ENCODE measurements at regions of chr1 and their contacts with region 1.

Region 1: DNA sequence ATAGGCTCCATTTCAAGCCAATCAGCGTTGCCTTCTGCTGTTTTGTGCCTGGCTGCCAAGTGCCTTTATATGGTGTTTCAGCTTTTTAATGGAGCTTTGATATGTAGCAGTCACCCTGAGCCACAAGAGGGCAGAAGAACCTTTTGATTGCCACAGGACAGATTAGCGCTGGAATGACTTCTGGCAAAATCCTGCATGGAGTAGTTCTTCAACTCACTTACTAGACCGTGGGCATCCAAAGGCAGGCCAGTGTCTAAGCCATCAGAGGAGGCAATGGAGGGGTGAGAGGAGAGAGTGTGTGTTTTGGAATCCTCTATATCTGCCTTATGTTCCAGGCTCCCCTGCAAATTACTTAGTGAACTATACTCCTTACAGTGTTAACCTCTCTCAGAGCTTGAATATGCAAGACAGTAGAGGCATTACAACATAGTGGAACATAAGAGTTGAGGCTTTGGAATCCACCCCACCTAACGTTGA is 56.2 kb downstream of the ST3GAL3 start:
- DNase-seq: peak; percentile 84
- H3K4me3 ChIP-seq: no peak overlapping the region
- H3K27ac ChIP-seq: peak overlapping the region; percentile 46
- H3K4me1 ChIP-seq: peaks cover 48% of the 10 kb centered on the region
- H3K27me3 ChIP-seq: no peaks in the 10 kb centered on the region
- CTCF ChIP-seq: peak; percentile 87 to 93

Region 2: DNA sequence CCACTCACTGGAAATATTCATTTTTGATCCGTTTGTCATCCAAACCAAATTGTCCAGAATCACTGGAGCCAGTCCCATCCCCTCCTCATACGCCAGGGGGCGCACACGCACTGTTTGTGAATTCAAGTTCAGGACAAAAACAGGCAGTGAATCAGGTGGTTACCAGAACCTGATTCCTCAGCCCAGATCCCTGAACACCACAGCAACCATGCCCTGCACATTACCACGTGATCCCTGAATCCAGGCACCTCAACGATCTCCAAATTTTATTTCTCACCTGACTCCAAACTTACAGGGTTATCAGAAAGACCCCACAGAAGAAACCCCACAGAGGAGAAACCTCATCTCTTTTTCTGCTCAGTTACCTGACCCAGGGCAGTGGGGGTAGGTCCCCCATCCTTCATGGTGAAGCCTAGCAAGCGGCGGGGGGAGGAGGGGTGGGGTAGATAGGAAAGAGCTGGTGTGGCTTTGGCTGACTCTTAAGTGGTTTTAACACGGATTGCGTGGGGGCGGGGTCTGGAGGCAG is 234.3 kb before region 1 on chr1:
- CTCF ChIA-PET with region 1: no interaction called
- dilution Hi-C with region 1: no loop called
- in situ Hi-C with region 1: no loop called
- intact Hi-C with region 1: loop called (anchors 1 kb)
- DNase-seq: peak; percentile 75
- H3K4me3 ChIP-seq: no peak overlapping the region
- H3K27ac ChIP-seq: no peak overlapping the region
- H3K4me1 ChIP-seq: peaks cover 24% of the 10 kb centered on the region
- H3K27me3 ChIP-seq: no peaks in the 10 kb centered on the region
- CTCF ChIP-seq: peak; percentile 93 to 98

Region 3: GRCh38 chr1:43836267-43836951 is 72.9 kb after region 1 on chr1:
- CTCF ChIA-PET with region 1: no interaction called
- dilution Hi-C with region 1: loop called (anchors 5 kb)
- in situ Hi-C with region 1: no loop called
- intact Hi-C with region 1: loop called (anchors 2 kb)
- DNase-seq: peak; percentile 84
- H3K4me3 ChIP-seq: no peak overlapping the region
- H3K27ac ChIP-seq: peak overlapping the region; percentile 56
- H3K4me1 ChIP-seq: peaks cover 69% of the 10 kb centered on the region
- H3K27me3 ChIP-seq: no peaks in the 10 kb centered on the region
- CTCF ChIP-seq: no peak

Region 4: DNA sequence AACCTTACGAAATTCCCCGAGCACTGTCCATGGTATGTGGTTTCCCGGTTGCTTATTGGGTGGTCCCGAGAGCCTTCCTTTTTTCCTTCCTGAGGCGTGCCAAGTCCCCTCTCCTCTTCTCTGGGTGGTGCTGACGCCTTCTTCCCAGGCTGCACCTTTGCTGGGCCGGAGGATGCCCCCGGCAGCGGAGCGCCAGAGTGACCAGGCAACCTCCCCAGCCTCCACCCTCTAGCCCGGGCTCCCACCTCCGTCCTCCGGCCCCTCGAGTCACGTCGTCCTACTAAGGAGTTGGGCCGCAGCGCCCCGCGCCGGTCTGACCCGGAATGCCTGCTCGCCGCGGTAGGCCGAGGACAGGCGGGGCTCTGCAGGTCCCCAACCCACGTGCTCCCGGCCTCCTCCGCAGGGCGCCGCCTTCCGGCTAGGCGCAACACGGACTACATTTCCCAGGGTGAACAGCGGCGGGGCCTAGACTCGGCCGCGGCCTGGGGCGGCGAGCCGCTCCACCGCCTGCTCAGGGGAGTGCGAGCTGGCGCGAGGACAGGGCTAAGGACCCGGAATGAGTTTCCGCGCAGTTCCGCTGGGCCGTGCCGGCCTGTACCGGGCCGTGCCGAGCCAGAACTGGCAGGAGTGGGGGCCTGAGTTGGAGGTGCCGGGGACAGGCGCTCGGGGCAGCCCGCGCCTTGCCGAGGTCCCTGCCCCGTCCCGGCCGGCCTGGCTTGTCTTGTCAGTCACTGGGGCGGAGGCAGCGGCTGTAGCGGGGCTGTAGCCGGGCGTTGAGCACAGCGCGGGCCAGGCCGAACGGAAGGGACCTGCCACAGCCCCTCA is 182.9 kb after region 1 on chr1 and contains the start of gene IPO13:
- CTCF ChIA-PET with region 1: no interaction called
- dilution Hi-C with region 1: no loop called
- in situ Hi-C with region 1: loop called in 1 of 2 experiments (anchors 10 kb)
- intact Hi-C with region 1: loop called (anchors 1 kb)
- DNase-seq: peak; percentile 96
- H3K4me3 ChIP-seq: peak within 1 kb of the TSS; percentile 89 to 97 (median 96)
- H3K27ac ChIP-seq: peak within 1 kb of the TSS; percentile 84
- H3K4me1 ChIP-seq: peaks cover 19% of the 10 kb centered on the region
- H3K27me3 ChIP-seq: no peaks in the 10 kb centered on the region
- CTCF ChIP-seq: peak; percentile 35 to 82
- total RNA-seq, gene IPO13: 35.5 to 53.0 TPM

Region 5: GRCh38 chr1:44002606-44003157 is 239.1 kb after region 1 on chr1:
- CTCF ChIA-PET with region 1: no interaction called
- dilution Hi-C with region 1: no loop called
- in situ Hi-C with region 1: no loop called
- intact Hi-C with region 1: loop called (anchors 1 kb)
- DNase-seq: no peak
- H3K4me3 ChIP-seq: no peak overlapping the region
- H3K27ac ChIP-seq: no peak overlapping the region
- H3K4me1 ChIP-seq: no peaks in the 10 kb centered on the region
- H3K27me3 ChIP-seq: no peaks in the 10 kb centered on the region
- CTCF ChIP-seq: peak in 1 of 2 donors; percentile 9

Region 6: DNA sequence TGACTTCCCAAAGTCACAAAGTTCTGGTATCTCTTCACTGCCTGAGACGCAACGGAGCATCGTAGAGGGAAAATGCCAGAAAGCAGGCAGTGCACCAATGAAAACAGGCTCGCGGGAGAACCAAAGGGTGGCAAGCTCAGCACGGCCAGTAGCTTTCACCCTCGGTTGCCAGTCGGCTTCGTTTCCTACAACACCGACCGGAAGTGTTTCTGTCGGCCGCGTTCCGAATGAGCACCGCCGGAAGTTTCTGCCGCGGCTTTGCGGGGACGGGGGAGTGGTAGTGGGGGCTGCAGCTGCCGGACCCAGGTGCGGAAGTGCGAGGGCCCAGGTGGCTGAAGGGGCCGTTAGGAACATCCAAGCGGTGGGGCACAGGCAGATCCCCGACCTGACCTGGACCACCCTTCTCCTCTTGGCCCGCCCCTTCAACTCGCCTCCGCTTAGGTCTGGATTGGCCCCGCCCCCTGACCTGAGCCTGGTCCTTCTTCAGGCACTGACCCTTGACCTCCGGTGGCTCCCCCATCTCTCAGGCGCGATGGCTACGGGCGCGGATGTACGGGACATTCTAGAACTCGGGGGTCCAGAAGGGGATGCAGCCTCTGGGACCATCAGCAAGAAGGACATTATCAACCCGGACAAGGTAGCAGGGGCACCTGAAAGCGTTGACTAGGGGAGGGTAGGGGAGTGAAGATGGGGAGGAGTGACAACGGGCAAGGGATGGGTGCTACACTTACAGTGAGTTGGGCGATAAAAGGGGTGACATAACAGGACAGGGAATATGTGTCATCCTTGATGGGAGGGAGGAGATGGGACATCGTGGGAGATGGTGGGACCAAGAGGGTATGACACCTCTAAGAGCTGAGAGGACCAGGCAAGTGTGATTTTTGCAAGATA is 449.9 kb after region 1 on chr1 and contains the start of gene DMAP1:
- CTCF ChIA-PET with region 1: no interaction called
- dilution Hi-C with region 1: no loop called
- in situ Hi-C with region 1: no loop called
- intact Hi-C with region 1: loop called (anchors 10 kb)
- DNase-seq: peak; percentile 71
- H3K4me3 ChIP-seq: peak within 1 kb of the TSS; percentile 69 to 94 (median 72)
- H3K27ac ChIP-seq: peak within 1 kb of the TSS; percentile 29
- H3K4me1 ChIP-seq: peaks cover 18% of the 10 kb centered on the region
- H3K27me3 ChIP-seq: no peaks in the 10 kb centered on the region
- CTCF ChIP-seq: peak in 1 of 2 donors; percentile 30
- total RNA-seq, gene DMAP1: 21.5 to 30.0 TPM